ENCODE measurements at regions of chr12 and their contacts with region 1.

Region 1: DNA sequence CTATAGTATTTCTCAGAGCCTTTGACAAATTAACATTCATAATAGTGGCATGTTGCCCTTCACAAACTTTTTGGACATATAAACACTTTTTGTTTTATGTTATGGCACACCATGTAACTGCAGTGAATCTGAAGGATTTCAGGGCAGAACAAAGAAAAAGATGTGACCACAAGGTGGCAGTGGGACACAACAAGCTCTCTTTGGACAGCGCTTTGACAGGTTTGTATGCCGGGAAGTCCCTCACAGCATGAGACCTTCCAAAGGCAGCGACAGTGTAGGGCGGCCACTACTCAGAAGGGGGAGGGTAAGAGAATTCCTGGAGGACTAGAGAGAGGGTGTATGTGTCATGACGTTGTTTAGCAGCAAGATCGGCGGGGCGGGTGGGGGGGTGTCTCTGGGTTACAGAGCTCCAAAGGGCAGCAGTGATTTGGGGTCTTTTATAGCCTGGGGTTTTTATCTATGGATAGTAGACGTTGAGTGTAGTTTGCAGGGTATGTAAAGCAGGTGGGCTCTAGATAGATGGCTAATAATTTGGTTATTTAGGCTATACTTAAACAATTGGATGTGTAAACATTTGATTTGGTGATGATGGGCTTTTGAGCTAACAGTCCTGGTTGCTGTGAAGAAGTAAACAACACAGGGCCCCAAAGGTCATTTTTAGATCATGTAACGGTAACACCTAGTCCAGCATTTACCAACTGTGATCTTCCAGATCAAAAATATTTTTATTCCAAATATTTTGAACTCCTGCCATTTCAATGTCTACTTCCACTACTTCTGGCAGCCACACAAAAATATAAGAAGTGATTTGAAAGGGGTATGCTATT is 22.9 kb downstream of the ETFBKMT start:
- DNase-seq: peak; percentile 44
- ATAC-seq: peak in 1 of 2 donors; percentile 80

Region 2: GRCh38 chr12:31578632-31579031 is 103.7 kb before region 1 on chr12:
- intact Hi-C with region 1: no loop called
- DNase-seq: peak; percentile 39
- ATAC-seq: peak; percentile 59 to 77

Region 3: DNA sequence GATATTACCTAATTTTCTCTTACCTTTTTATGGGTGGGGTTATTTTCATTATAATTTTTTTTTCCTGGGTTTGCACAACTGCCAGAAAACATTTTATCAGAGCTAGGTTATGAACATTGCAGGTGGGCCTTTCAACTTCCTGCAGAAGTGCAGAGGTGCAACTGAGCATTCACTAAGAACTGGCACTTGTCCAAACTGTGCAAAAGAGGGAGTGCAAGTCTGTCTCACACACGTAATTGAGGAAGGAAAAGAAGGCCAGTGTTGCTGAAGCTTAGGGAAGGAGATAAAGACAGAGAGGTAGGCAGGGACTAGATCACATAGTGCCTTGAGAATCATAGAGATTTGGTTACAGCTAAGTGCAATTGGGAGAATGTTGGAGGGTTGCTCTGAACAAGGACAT is 60.5 kb after region 1 on chr12:
- intact Hi-C with region 1: no loop called
- DNase-seq: no peak
- ATAC-seq: no peak

Region 4: GRCh38 chr12:31790759-31791158 is 108.4 kb after region 1 on chr12:
- intact Hi-C with region 1: no loop called
- DNase-seq: no peak
- ATAC-seq: no peak

Region 5: DNA sequence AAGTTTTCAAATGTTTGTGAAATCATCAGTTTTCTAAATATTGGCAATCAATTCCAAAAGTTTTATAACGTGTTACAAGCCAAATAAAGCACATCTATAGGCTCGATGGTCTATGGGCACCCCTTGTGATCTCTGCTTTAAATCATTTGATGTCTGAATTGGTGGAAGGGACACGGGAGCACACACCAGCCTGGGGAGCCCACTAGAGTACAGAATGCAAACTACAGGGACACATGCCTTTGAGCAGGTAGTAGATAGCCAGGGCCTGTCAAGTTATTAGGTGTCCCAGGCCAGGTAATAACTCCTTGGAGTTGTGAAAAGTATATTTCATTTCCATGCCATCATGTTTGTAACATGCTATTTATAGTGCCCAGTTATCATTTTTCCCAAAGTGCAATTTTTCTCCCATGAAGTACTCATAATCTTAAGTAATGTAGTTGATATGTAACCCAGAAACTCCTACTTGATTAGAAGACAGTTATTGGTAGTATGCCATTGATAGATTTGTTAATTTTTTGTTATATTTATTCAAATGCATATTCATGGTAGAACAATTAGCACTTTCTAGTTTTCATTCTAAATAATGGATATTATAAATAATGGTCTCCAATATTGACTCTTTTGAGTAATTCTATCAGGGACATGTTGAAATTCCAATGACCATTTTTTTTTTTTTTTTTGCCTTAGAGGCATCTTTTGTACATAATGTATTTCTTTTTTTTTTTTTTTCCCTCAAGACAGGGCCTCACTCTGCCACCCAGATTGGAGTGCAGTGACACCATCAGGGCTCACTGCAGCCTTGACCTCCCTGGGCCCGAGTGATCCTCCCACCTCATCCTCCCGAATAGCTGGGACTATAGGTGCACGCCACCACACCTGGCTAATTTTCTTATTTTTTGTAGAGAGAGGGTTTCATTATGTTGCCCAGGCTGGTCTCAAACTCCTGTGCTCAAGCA is 620.1 kb after region 1 on chr12:
- intact Hi-C with region 1: loop called in 1 of 2 experiments (anchors 10 kb)
- DNase-seq: no peak
- ATAC-seq: peak in 1 of 2 donors; percentile 46